Esophagus squamous epithelium (tissue), 5 donors: ENCODE measurements at regions of chr21 and their contacts with region 1.

Region 1: GRCh38 chr21:36319765-36320420 is at the start of gene MORC3:
- DNase-seq: peak; percentile 74
- H3K4me3 ChIP-seq: peak within 1 kb of the TSS; percentile 73 to 95 (median 90)
- H3K27ac ChIP-seq: peak within 1 kb of the TSS; percentile 96 to 100 (median 98)
- H3K4me1 ChIP-seq: peaks cover 0 to 44% (median 29%) of the 10 kb centered on the region in 3 donors
- H3K27me3 ChIP-seq: no peaks in the 10 kb centered on the region
- CTCF ChIP-seq: peak in 2 of 6 experiments; percentile 19 to 20
- POLR2A ChIP-seq: peak in 3 of 4 donors; percentile 56 to 97 (median 85)
- total RNA-seq, gene MORC3: 31.9 to 50.5 (median 43.1) TPM

Region 2: GRCh38 chr21:36141513-36141925 is 178.4 kb before region 1 on chr21:
- intact Hi-C with region 1: loop called (anchors 10 kb)
- DNase-seq: peak; percentile 54
- H3K4me3 ChIP-seq: no peak overlapping the region
- H3K27ac ChIP-seq: peak overlapping the region; percentile 43 to 89 (median 84)
- H3K4me1 ChIP-seq: peaks cover 0 to 44% (median 17%) of the 10 kb centered on the region in 3 donors
- H3K27me3 ChIP-seq: no peaks in the 10 kb centered on the region
- CTCF ChIP-seq: peak; percentile 76 to 95 (median 90)
- POLR2A ChIP-seq: no peak

Region 3: DNA sequence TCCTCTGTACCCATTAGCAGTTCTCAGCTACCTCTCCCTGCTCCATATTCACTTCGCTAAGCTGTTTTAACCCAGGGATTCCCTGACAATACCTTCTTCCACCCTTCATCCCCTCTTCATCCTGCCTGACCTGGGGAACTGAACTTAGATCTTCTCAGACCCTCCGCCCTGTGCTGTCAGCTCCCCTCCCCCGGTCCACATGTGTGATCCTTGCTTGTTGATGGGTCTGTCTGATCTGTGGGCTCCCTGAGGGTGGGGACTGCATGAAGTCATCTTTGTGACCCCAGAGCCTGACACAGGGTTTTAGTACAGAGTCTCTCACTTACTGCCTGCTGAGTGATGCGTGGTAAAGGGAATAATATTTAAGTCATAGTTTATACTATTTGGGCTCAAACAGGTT is 77.1 kb after region 1 on chr21:
- intact Hi-C with region 1: no loop called
- DNase-seq: no peak
- H3K4me3 ChIP-seq: no peak overlapping the region
- H3K27ac ChIP-seq: no peak overlapping the region
- H3K4me1 ChIP-seq: no peaks in the 10 kb centered on the region
- H3K27me3 ChIP-seq: no peaks in the 10 kb centered on the region
- CTCF ChIP-seq: no peak
- POLR2A ChIP-seq: no peak

Region 4: GRCh38 chr21:36419996-36420395 is 100.1 kb after region 1 on chr21:
- intact Hi-C with region 1: no loop called
- DNase-seq: no peak
- H3K4me3 ChIP-seq: no peak overlapping the region
- H3K27ac ChIP-seq: no peak overlapping the region
- H3K4me1 ChIP-seq: peaks cover 0 to 15% (median 0%) of the 10 kb centered on the region in 3 donors
- H3K27me3 ChIP-seq: no peaks in the 10 kb centered on the region
- CTCF ChIP-seq: peak; percentile 62 to 84 (median 72)
- POLR2A ChIP-seq: no peak

Region 5: DNA sequence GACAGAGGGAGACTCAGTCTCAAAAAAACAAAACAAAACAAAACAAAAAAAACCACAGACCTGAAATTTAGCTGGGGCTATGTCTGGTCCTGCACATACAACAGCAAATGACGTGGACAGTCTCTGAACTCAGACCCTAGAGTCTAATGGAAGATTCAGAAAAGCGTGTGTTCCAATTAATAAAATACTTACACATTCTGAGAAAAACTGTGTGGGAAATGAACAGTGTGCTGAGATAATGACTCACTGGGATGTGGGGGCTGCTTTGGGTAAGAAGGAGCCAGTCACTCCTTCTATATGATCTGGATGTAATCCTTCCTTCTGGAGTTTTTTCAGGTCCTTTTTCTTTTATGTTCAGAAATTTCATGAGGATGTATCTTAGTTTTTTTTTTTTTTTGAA is 130.6 kb after region 1 on chr21:
- intact Hi-C with region 1: no loop called
- DNase-seq: no peak
- H3K4me3 ChIP-seq: no peak overlapping the region
- H3K27ac ChIP-seq: no peak overlapping the region
- H3K4me1 ChIP-seq: peaks cover 0 to 12% (median 0%) of the 10 kb centered on the region in 3 donors
- H3K27me3 ChIP-seq: no peaks in the 10 kb centered on the region
- CTCF ChIP-seq: no peak
- POLR2A ChIP-seq: no peak